ENCODE measurements at regions of chr2 and their contacts with region 1.

Region 1: GRCh38 chr2:20796374-20796791 is 26.5 kb downstream of the LDAH start:
- DNase-seq: no peak

Region 2: DNA sequence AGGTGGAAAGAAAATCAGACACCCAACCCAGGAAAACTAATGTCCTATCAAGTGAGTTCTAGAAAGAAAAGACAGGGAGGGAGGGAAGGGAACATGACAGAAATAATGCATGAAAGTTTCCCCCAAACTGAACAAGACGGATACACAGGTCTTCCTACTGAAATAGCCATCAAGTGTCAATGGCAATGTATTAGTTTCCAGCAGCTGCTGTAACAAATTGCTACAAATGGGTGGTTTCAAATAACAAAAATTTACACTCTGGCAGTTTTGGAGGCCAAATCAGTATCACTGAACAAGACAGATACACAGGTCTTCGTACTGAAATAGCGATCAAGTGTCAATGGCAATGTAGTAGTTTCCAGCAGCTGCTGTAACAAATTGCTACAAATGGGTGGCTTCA is 44.1 kb before region 1 on chr2:
- intact Hi-C with region 1: loop called in 1 of 2 experiments (anchors 2 kb)
- DNase-seq: no peak

Region 3: DNA sequence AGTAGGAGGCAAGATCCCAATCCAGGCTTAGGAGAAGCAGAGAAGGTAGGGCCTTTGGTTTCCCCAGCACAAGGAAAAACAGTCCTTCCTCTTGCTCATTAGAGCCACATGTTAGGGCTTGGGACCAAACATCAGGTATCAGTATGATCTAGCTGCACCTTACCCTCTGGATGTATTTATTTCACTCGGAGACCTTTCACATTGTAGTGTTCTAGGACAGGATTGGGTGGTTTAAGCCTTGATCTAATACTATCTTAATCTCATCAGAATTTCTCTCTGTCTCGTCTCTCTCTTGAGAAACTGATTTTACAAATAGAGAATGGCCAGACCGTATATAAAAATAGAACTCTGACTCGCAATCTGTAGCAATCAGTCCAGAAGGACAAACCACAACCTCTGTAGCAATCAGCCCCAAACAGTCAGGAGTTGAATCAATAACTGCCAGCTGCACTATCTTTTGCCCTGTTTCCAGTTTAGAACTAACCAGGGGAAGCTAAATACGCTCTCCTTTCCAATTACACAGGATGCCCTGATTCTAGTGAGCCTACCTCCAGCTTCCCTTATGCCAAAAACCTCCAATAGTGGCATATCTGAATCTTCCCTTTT is 534.5 kb after region 1 on chr2:
- intact Hi-C with region 1: no loop called
- DNase-seq: no peak

Measured in posterior vena cava (tissue), 2 donors.